IMR-90 (cell line): ENCODE measurements at regions of chr16 and their contacts with region 1.

Region 1: GRCh38 chr16:50210266-50211038 is 55.9 kb upstream of the ADCY7 start:
- DNase-seq: peak; percentile 87
- ATAC-seq: peak; percentile 91
- H3K4me3 ChIP-seq: no peak overlapping the region
- H3K27ac ChIP-seq: no peak overlapping the region
- H3K4me1 ChIP-seq: peaks cover 13% of the 10 kb centered on the region
- H3K27me3 ChIP-seq: no peaks in the 10 kb centered on the region
- CTCF ChIP-seq: peak; percentile 87
- POLR2A ChIP-seq: no peak
- RAD21 ChIP-seq: peak; percentile 87

Region 2: GRCh38 chr16:50065624-50066481 is 144.6 kb before region 1 on chr16 and contains the start of gene HEATR3:
- CTCF ChIA-PET with region 1: interaction called, 25 read pairs
- POLR2A ChIA-PET with region 1: no interaction called
- dilution Hi-C with region 1: no loop called
- in situ Hi-C with region 1: loop called (anchors 5 kb)
- intact Hi-C with region 1: loop called (anchors 1 kb)
- DNase-seq: peak; percentile 88
- ATAC-seq: peak; percentile 94
- H3K4me3 ChIP-seq: peak within 1 kb of the TSS; percentile 89
- H3K27ac ChIP-seq: peak within 1 kb of the TSS; percentile 96
- H3K4me1 ChIP-seq: peaks cover 11% of the 10 kb centered on the region
- H3K27me3 ChIP-seq: no peaks in the 10 kb centered on the region
- CTCF ChIP-seq: 0 out of 2 replicates have a peak, but pooled peaks have one; percentile 1
- POLR2A ChIP-seq: 0 out of 2 replicates have a peak, but pooled peaks have one; percentile 11
- RAD21 ChIP-seq: no peak
- total RNA-seq, gene HEATR3: 21.1 and 25.3 TPM in 2 replicates

Region 3: GRCh38 chr16:50160495-50161164 is 49.8 kb before region 1 on chr16:
- CTCF ChIA-PET with region 1: interaction called, 9 read pairs
- POLR2A ChIA-PET with region 1: no interaction called
- dilution Hi-C with region 1: no loop called
- in situ Hi-C with region 1: loop called (anchors 5 kb)
- intact Hi-C with region 1: no loop called
- DNase-seq: peak; percentile 41
- ATAC-seq: peak; percentile 98
- H3K4me3 ChIP-seq: no peak overlapping the region
- H3K27ac ChIP-seq: no peak overlapping the region
- H3K4me1 ChIP-seq: peaks cover 3% of the 10 kb centered on the region; the same call in 1 of the 2 replicates
- H3K27me3 ChIP-seq: no peaks in the 10 kb centered on the region
- CTCF ChIP-seq: no peak
- POLR2A ChIP-seq: no peak
- RAD21 ChIP-seq: no peak

Region 4: GRCh38 chr16:50354629-50355456 is 144.4 kb after region 1 on chr16:
- CTCF ChIA-PET with region 1: interaction called, 10 read pairs
- POLR2A ChIA-PET with region 1: no interaction called
- dilution Hi-C with region 1: no loop called
- in situ Hi-C with region 1: no loop called
- intact Hi-C with region 1: loop called (anchors 1 kb)
- DNase-seq: no peak
- ATAC-seq: no peak
- H3K4me3 ChIP-seq: no peak overlapping the region
- H3K27ac ChIP-seq: no peak overlapping the region
- H3K4me1 ChIP-seq: no peaks in the 10 kb centered on the region
- H3K27me3 ChIP-seq: no peaks in the 10 kb centered on the region
- CTCF ChIP-seq: peak; percentile 60
- POLR2A ChIP-seq: no peak
- RAD21 ChIP-seq: peak; percentile 50

Region 5: GRCh38 chr16:50644729-50645128 is 434.3 kb after region 1 on chr16:
- CTCF ChIA-PET with region 1: no interaction called
- POLR2A ChIA-PET with region 1: no interaction called
- dilution Hi-C with region 1: no loop called
- in situ Hi-C with region 1: no loop called
- intact Hi-C with region 1: no loop called
- DNase-seq: no peak
- ATAC-seq: no peak
- H3K4me3 ChIP-seq: no peak overlapping the region
- H3K27ac ChIP-seq: no peak overlapping the region
- H3K4me1 ChIP-seq: no peaks in the 10 kb centered on the region
- H3K27me3 ChIP-seq: peaks cover 20% of the 10 kb centered on the region
- CTCF ChIP-seq: 0 out of 2 replicates have a peak, but pooled peaks have one; percentile 7
- POLR2A ChIP-seq: no peak
- RAD21 ChIP-seq: peak; percentile 20; the same call in 1 of the 2 replicates

Region 6: DNA sequence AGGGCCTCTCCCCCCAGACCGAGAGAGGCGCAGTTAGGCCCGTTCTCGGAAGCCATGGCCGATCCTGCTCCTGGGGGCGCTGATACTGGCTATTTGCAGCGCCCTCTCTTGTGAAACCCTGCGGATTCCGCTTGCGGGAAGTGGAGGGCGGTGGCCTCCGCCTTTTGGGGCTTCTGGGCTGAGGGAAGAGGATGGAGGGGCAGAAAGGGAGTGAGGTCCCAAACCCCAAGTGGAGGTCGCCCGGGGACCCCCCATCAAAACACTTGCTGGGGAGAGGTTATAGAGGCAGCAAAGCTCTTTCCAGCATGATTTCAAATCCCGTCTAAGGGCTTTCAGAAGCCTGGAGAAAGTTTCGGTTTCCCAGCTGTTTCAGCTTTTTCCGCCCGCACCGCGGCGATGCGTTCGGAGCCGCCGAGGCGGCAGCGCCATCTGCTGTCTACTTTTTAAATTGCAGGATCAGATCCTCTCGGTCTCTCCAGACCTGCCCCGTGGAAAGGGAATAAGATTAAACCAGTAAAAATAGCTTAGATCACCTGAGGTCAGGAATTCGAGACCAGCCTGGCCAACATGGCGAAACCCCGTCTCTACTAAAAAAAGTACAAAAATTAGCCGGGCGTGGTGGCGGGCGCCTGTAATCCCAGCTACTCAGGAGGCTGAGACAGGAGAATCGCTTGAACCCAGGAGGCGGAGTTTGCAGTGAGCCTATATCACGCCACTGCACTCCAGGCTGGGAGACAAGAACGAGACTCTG is 454.9 kb after region 1 on chr16:
- CTCF ChIA-PET with region 1: no interaction called
- POLR2A ChIA-PET with region 1: no interaction called
- dilution Hi-C with region 1: no loop called
- in situ Hi-C with region 1: loop called (anchors 25 kb)
- intact Hi-C with region 1: loop called (anchors 1 kb)
- DNase-seq: peak; percentile 57
- ATAC-seq: peak; percentile 98
- H3K4me3 ChIP-seq: peak overlapping the region; percentile 47
- H3K27ac ChIP-seq: no peak overlapping the region
- H3K4me1 ChIP-seq: no peaks in the 10 kb centered on the region
- H3K27me3 ChIP-seq: no peaks in the 10 kb centered on the region; the same call in 1 of the 2 replicates
- CTCF ChIP-seq: peak; percentile 94
- POLR2A ChIP-seq: no peak
- RAD21 ChIP-seq: peak; percentile 83